Mammary epithelial cell (primary cell): ENCODE measurements at regions of chrX and their contacts with region 1.

Region 1: GRCh38 chrX:128216364-128216763 is 164.2 kb upstream of the ACTRT1 start:
- DNase-seq: no peak
- H3K4me3 ChIP-seq: no peak overlapping the region
- H3K27ac ChIP-seq: no peak overlapping the region
- H3K4me1 ChIP-seq: no peaks in the 10 kb centered on the region
- H3K27me3 ChIP-seq: no peaks in the 10 kb centered on the region
- CTCF ChIP-seq: no peak

Region 2: GRCh38 chrX:128739527-128739926 is 523.2 kb after region 1 on chrX:
- CTCF ChIA-PET with region 1: no interaction called
- dilution Hi-C with region 1: no loop called
- in situ Hi-C with region 1: no loop called
- intact Hi-C with region 1: no loop called
- DNase-seq: no peak
- H3K4me3 ChIP-seq: no peak overlapping the region
- H3K27ac ChIP-seq: no peak overlapping the region
- H3K4me1 ChIP-seq: no peaks in the 10 kb centered on the region
- H3K27me3 ChIP-seq: no peaks in the 10 kb centered on the region
- CTCF ChIP-seq: no peak

Region 3: DNA sequence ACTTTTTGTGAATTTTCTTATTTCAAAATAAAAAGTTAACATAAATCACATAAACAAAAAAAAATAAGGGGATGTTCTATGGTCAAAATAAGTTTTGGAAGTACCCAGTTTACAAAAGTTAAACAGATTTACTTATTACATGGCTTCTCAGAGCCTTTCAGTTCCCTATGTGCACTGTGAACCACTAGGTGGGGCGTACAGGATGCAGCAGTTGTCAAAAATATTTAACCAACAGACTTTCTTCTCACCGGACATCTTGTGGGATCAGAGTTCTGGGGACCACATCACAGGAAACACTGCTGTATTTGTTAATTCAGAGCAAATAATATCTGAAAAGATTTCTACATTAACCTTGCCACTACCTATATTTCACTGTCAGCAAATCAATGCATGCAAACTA is 1232.8 kb after region 1 on chrX:
- CTCF ChIA-PET with region 1: interaction called, 14 read pairs
- dilution Hi-C with region 1: no loop called
- in situ Hi-C with region 1: no loop called
- intact Hi-C with region 1: no loop called
- DNase-seq: no peak
- H3K4me3 ChIP-seq: no peak overlapping the region
- H3K27ac ChIP-seq: no peak overlapping the region
- H3K4me1 ChIP-seq: no peaks in the 10 kb centered on the region
- H3K27me3 ChIP-seq: no peaks in the 10 kb centered on the region
- CTCF ChIP-seq: peak in 1 of 2 donors; percentile 3